ENCODE measurements at regions of chr2 and their contacts with region 1.

Region 1: GRCh38 chr2:199911052-199911876 is at the start of gene C2orf69:
- DNase-seq: peak; percentile 97
- H3K4me3 Mint-ChIP-seq: peak within 1 kb of the TSS; percentile 88
- H3K27ac Mint-ChIP-seq: peak within 1 kb of the TSS; percentile 77
- H3K4me1 Mint-ChIP-seq: peaks cover 30% of the 10 kb centered on the region
- H3K27me3 Mint-ChIP-seq: no peaks in the 10 kb centered on the region
- total RNA-seq, gene C2orf69: 17.9 to 18.9 TPM

Region 2: DNA sequence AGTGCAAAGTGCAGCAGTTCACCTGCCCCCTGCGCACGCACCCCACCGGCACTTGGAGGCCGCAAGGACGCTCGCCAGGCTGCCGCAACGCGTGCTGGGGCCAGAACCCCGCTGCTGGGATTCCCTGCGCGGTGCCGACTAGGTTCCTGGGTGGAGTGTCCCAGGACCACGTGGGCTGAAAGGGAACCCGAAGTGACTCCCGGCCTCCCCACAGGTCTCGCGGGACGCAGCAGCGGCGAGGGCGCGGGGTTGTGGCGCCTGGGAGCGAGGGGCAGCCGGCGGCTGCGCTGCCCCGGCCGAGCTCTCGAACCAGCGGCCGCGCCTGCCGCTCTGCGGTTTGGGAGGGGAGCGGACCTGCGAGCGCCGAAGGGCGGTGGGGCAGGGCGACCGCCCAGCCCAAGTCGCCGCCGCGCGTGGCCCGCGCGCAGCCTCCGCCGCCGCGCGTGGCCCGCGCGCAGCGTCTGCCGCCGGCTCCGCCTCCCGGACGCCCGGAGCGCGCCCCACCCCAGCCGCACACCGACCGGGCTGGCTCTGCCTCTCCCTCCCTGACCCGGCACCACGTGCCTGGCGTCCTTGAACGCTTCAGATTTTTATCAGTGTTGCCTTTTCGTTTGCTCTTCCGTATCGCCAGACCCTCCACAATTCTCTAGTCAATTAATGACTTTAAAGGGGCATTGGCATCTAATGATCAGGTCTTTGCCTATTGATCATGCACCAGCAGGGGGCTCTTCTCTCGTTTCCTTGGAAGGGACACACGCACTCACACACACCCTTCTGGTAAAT is 60.4 kb before region 1 on chr2 and contains the start of gene FTCDNL1:
- CTCF ChIA-PET with region 1: no interaction called
- POLR2A ChIA-PET with region 1: interaction called, 3 read pairs
- intact Hi-C with region 1: loop called (anchors 1 kb)
- DNase-seq: peak; percentile 78
- H3K4me3 Mint-ChIP-seq: peak within 1 kb of the TSS; percentile 92
- H3K27ac Mint-ChIP-seq: peak within 1 kb of the TSS; percentile 79
- H3K4me1 Mint-ChIP-seq: peaks cover 4% of the 10 kb centered on the region
- H3K27me3 Mint-ChIP-seq: no peaks in the 10 kb centered on the region
- total RNA-seq, gene FTCDNL1: 2.9 to 3.3 TPM

Region 3: DNA sequence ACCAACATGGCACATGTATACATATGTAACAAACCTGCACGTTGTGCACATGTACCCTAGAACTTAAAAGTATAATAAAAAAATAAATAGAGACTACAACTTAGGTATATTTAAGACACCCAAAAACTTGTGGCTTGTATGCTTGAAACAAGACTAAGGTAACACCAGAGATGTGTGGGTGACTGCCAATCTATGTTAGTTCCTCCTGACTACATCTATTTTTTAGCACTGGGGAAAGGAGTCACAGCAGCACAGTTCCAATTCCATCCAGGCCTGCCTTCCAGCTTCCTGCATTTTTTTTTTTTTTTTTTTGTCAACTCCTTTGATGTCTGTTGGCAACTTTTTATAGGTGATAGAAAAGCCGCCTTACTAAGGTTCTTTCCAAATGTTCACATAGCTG is 18.0 kb after region 1 on chr2:
- CTCF ChIA-PET with region 1: no interaction called
- POLR2A ChIA-PET with region 1: no interaction called
- intact Hi-C with region 1: loop called (anchors 2 kb)
- DNase-seq: no peak
- H3K4me3 Mint-ChIP-seq: no peak overlapping the region
- H3K27ac Mint-ChIP-seq: no peak overlapping the region
- H3K4me1 Mint-ChIP-seq: no peaks in the 10 kb centered on the region
- H3K27me3 Mint-ChIP-seq: no peaks in the 10 kb centered on the region

Region 4: GRCh38 chr2:199955339-199956261 is 44.3 kb after region 1 on chr2 and contains the starts of genes MAIP1 and TYW5:
- CTCF ChIA-PET with region 1: interaction called, 3 read pairs
- POLR2A ChIA-PET with region 1: no interaction called
- intact Hi-C with region 1: loop called (anchors 1 kb)
- DNase-seq: peak; percentile 84
- H3K4me3 Mint-ChIP-seq: peak within 1 kb of the TSS; percentile 99
- H3K27ac Mint-ChIP-seq: peak within 1 kb of the TSS; percentile 92
- H3K4me1 Mint-ChIP-seq: peaks cover 52% of the 10 kb centered on the region
- H3K27me3 Mint-ChIP-seq: no peaks in the 10 kb centered on the region
- total RNA-seq, gene MAIP1: 26.0 to 29.3 TPM
- total RNA-seq, gene TYW5: 8.9 to 9.8 TPM

Measured in activated CD4-positive, alpha-beta memory T cell treated with anti-CD3 and anti-CD28 coated beads for 36 hours (primary cell).